Activated CD4-positive, alpha-beta memory T cell treated with anti-CD3 and anti-CD28 coated beads for 36 hours (primary cell): ENCODE measurements at regions of chr16 and their contacts with region 1.

Region 1: DNA sequence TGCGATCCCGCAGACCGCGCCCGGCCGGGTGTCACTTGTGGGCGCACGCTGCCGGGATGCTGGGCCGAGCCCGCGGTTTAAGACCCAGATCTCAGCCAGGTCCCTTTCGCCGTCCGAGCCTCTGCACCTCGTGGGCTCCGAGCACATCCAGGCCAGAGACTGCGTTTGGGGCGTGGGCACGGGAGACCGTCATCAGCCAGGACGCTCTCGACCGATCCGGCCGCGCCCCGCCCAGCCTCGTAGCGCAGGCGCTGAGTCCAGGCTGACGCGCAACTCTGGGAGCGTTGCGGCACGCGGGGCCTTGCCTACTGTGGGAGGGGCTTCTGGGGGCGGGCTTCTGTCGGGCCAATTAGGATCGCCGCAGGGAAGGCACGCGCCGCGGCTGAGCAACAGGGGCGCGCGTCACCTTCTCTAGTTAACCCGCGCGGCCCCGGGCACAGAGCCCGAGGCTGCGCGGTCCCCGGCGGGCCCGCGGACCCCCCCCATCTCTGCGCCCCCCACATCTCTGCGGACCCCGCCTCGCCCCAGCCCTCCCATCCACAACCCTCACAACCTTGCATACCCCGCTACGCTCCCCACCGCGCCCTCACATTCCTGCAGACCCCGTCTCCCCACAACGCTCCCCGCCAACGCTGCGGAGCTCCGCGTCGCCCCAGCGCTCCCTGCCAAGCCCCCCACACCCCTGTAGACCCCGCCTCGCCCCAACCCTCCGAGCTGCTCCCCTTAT is 722 bp upstream of the CEMP1 start:
- DNase-seq: peak; percentile 99
- H3K4me3 Mint-ChIP-seq: peak overlapping the region; percentile 91
- H3K27ac Mint-ChIP-seq: peak overlapping the region; percentile 94
- H3K4me1 Mint-ChIP-seq: peaks cover 18% of the 10 kb centered on the region
- H3K27me3 Mint-ChIP-seq: no peaks in the 10 kb centered on the region

Region 2: DNA sequence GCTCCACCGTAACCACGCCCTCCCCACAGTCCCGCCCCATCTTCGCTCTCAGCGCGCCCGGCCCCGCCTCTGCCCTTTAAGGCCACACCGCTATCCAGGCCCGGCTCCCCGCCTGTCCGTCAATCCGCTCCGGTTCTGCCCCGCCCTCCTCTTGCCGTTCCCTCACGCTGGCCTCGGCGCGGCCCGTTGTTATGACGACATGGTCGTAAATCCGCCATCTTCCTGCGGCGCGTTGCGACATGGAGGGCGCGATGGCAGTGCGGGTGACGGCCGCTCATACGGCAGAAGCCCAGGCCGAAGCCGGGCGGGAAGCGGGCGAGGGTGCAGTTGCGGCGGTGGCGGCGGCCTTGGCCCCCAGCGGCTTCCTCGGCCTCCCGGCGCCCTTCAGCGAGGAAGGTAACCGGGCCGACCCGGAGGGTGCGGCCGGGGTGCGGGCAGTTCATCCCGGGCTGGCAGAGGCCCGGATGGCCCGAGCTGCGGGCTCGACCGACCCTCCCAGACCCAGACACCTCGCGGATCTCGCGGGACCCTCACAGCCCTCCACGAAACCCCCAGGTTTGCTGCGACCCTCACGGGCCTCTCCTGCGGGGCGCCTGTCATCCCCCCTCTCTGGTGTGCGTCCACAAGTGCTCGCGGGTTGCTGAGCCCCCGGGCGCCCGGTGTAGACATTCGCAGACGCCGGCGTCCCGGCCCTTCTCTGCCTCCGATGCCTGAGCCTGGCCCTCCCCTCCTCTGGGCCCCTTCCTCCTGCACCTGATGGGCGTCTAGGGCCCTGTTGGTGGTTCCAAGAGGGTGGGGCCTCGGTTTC is 308.4 kb before region 1 on chr16 and contains the start of gene E4F1:
- CTCF ChIA-PET with region 1: no interaction called
- POLR2A ChIA-PET with region 1: no interaction called
- intact Hi-C with region 1: no loop called
- DNase-seq: peak; percentile 100
- H3K4me3 Mint-ChIP-seq: peak within 1 kb of the TSS; percentile 81
- H3K27ac Mint-ChIP-seq: peak within 1 kb of the TSS; percentile 45
- H3K4me1 Mint-ChIP-seq: peaks cover 16% of the 10 kb centered on the region
- H3K27me3 Mint-ChIP-seq: no peaks in the 10 kb centered on the region
- total RNA-seq, gene E4F1: 19.3 to 19.6 TPM

Region 3: DNA sequence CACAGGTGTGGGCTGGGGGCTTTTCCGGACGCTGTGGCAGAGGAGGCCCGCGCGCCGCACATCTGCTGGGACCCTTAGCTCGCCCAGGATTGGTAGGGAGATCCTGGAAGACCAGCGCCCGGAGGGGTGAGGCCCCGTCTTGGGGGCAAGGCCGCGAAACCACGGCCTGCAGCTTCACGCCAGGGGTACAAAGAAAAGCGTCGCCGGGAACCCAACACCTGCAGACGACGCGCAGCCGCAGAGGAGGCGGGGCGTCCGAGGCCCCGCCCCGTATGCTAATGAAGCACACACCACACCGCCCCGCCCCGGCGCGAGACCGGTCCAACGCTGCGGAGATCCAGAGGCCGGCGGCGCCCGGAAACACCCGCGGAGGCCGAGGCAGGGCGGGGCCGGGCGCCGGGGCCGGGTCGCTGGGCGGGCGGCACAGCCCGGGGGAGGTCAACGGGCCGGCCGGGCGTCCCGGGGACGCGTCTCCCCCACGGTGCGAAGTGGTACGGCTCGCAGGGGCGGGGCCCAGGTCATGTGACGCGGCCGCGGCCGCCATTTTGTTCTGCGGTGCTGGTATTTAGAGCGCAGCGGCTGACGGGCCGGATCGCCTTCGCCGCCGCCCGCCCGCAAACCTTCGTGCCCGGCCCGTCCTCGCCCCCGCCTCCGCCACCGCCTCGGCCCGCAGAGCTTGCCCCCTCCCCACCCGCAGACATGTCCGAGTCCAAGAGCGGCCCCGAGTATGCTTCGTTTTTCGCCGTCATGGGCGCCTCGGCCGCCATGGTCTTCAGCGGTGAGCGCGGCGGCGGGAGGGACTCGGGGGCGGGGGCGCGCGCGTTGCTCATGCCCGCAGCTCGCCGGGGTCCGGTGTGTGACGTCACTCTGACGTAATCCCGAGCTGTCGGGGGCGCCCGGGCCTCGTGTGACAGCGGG is 18.3 kb before region 1 on chr16 and contains the start of gene ATP6V0C:
- CTCF ChIA-PET with region 1: no interaction called
- POLR2A ChIA-PET with region 1: interaction called, 43 read pairs
- intact Hi-C with region 1: loop called (anchors 2 kb)
- DNase-seq: peak; percentile 91
- H3K4me3 Mint-ChIP-seq: peak within 1 kb of the TSS; percentile 92
- H3K27ac Mint-ChIP-seq: peak within 1 kb of the TSS; percentile 91
- H3K4me1 Mint-ChIP-seq: peaks cover 40% of the 10 kb centered on the region
- H3K27me3 Mint-ChIP-seq: no peaks in the 10 kb centered on the region
- total RNA-seq, gene ATP6V0C: 111 to 115 TPM

Region 4: DNA sequence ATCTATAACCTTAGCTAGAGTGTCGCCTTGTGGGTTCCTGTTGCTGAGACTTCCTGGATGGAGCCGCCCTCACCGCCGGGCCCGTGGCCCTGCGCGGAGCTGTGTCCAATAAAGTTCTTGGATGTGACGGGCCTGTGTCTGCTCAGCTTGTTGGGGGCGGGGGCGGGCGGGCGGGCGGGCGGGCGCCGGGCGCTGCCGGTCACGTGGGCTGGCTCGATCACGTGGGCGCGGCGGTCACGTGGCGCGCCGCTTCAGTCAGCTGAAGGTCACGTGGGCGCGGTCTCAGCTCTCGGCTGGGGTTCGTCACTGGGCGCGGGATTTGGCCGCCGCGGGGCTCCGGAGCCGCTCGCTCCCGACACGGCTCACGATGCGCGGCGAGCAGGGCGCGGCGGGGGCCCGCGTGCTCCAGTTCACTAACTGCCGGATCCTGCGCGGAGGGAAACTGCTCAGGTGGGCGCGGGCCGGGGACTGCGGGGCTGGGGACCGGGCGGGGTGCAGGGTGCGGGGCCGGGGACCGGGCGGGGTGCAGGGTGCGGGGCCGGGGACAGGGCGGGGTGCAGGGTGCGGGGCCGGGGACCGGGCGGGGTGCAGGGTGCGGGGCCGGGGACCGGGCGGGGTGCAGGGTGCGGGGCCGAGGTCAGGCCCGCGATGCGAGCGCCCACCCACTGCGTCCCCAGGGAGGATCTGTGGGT is 11.7 kb before region 1 on chr16 and contains the start of gene AMDHD2:
- CTCF ChIA-PET with region 1: interaction called, 4 read pairs
- POLR2A ChIA-PET with region 1: interaction called, 43 read pairs
- intact Hi-C with region 1: no loop called
- DNase-seq: peak; percentile 94
- H3K4me3 Mint-ChIP-seq: peak within 1 kb of the TSS; percentile 83
- H3K27ac Mint-ChIP-seq: peak within 1 kb of the TSS; percentile 86
- H3K4me1 Mint-ChIP-seq: peaks cover 47% of the 10 kb centered on the region
- H3K27me3 Mint-ChIP-seq: no peaks in the 10 kb centered on the region
- total RNA-seq, gene AMDHD2: 28.3 to 30.5 TPM